H1 (cell line): ENCODE measurements at regions of chr15 and their contacts with region 1.

Region 1: GRCh38 chr15:42084460-42085235 is 9.7 kb downstream of the PLA2G4D start:
- DNase-seq: peak; percentile 65 to 91
- H3K4me3 ChIP-seq: no peak overlapping the region
- H3K27ac ChIP-seq: no peak overlapping the region
- H3K4me1 ChIP-seq: peaks cover 6 to 17% (median 11%) of the 10 kb centered on the region in 4 experiments
- H3K27me3 ChIP-seq: no peaks in the 10 kb centered on the region
- CTCF ChIP-seq: peak; percentile 93 to 99 (median 97)
- EP300 ChIP-seq: no peak
- POLR2A ChIP-seq: no peak
- RAD21 ChIP-seq: peak; percentile 88 to 91

Region 2: GRCh38 chr15:41989259-41989933 is 95.3 kb before region 1 on chr15:
- CTCF ChIA-PET with region 1: interaction called, 196 read pairs
- POLR2A ChIA-PET with region 1: no interaction called
- DNase-seq: peak; percentile 70 to 100
- H3K4me3 ChIP-seq: no peak overlapping the region
- H3K27ac ChIP-seq: no peak overlapping the region
- H3K4me1 ChIP-seq: peaks cover 0 to 5% (median 1%) of the 10 kb centered on the region in 4 experiments; a peak in 4 of 7 replicates
- H3K27me3 ChIP-seq: no peaks in the 10 kb centered on the region
- CTCF ChIP-seq: peak; percentile 98 to 99 (median 98)
- EP300 ChIP-seq: no peak
- POLR2A ChIP-seq: no peak
- RAD21 ChIP-seq: peak; percentile 99 to 100

Region 3: GRCh38 chr15:42056934-42057779 is 27.5 kb before region 1 on chr15:
- CTCF ChIA-PET with region 1: interaction called, 425 read pairs
- POLR2A ChIA-PET with region 1: no interaction called
- DNase-seq: peak; percentile 77 to 90
- H3K4me3 ChIP-seq: peak overlapping the region; percentile 4 to 50 (median 26); a peak in 5 of 8 replicates
- H3K27ac ChIP-seq: no peak overlapping the region
- H3K4me1 ChIP-seq: no peaks in the 10 kb centered on the region
- H3K27me3 ChIP-seq: no peaks in the 10 kb centered on the region; a peak in 1 of 7 replicates
- CTCF ChIP-seq: peak; percentile 59 to 88 (median 85)
- EP300 ChIP-seq: peak in 1 of 2 experiments; percentile 37; a peak in 1 of 3 replicates
- POLR2A ChIP-seq: no peak
- RAD21 ChIP-seq: peak; percentile 74 to 82

Region 4: GRCh38 chr15:42107473-42107872 is 22.8 kb after region 1 on chr15:
- CTCF ChIA-PET with region 1: interaction called, 27 read pairs
- POLR2A ChIA-PET with region 1: no interaction called
- DNase-seq: no peak
- H3K4me3 ChIP-seq: no peak overlapping the region
- H3K27ac ChIP-seq: no peak overlapping the region
- H3K4me1 ChIP-seq: no peaks in the 10 kb centered on the region
- H3K27me3 ChIP-seq: no peaks in the 10 kb centered on the region
- CTCF ChIP-seq: no peak
- EP300 ChIP-seq: no peak
- POLR2A ChIP-seq: no peak
- RAD21 ChIP-seq: no peak

Region 5: DNA sequence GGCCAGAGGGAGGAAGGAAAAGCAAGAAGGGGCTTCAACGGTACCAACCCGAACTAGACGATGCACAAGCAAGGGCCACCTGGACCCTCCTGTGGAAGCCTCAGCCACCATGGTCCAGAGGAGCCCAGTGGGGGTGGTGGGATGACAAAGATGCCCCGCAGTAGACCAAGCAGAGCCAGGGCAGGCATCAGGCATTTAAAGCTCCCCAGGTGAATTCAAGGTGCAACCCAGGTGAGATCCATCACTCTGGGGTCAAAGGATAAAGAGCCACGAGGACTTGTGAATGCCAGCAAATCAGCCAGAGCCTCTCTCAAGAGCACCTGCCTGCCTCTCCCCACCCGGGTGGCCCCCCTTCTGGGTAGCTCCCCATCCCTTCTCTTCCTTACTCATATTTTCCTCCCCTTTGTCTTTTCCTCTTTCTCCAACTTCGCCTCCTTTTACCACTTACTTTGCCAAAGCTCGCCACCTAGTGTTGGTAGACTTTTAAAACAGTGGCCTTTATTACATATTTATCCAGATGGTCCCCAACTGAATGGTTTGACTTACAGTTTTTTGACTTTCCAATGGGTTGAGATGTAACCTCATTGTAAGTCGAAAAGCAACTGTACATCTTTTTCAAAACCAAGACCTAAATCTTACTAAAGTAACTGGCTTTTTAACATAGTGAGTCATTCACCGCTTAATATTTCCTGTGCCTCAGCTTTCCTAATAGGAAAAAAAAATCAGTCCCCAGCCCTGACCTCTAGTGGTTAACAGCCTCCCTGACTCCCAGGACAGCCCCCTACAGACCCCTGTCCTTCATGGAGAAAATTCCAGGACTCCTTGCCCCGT is 53.0 kb after region 1 on chr15:
- CTCF ChIA-PET with region 1: interaction called, 276 read pairs
- POLR2A ChIA-PET with region 1: interaction called, 5 read pairs
- DNase-seq: peak in 1 of 2 experiments; percentile 56
- H3K4me3 ChIP-seq: no peak overlapping the region
- H3K27ac ChIP-seq: no peak overlapping the region
- H3K4me1 ChIP-seq: no peaks in the 10 kb centered on the region
- H3K27me3 ChIP-seq: no peaks in the 10 kb centered on the region
- CTCF ChIP-seq: peak; percentile 46 to 64 (median 48)
- EP300 ChIP-seq: no peak
- POLR2A ChIP-seq: no peak
- RAD21 ChIP-seq: peak; percentile 67 to 72

Region 6: GRCh38 chr15:42385206-42385979 is 300.7 kb after region 1 on chr15:
- CTCF ChIA-PET with region 1: interaction called, 11 read pairs
- POLR2A ChIA-PET with region 1: no interaction called
- DNase-seq: peak; percentile 47 to 76
- H3K4me3 ChIP-seq: no peak overlapping the region
- H3K27ac ChIP-seq: no peak overlapping the region
- H3K4me1 ChIP-seq: peaks cover 0 to 12% (median 4%) of the 10 kb centered on the region in 4 experiments; a peak in 5 of 7 replicates
- H3K27me3 ChIP-seq: no peaks in the 10 kb centered on the region
- CTCF ChIP-seq: peak; percentile 75 to 95 (median 80)
- EP300 ChIP-seq: no peak
- POLR2A ChIP-seq: no peak
- RAD21 ChIP-seq: peak; percentile 92 to 93